Panc1 (cell line): ENCODE measurements at regions of chr12 and their contacts with region 1.

Region 1: DNA sequence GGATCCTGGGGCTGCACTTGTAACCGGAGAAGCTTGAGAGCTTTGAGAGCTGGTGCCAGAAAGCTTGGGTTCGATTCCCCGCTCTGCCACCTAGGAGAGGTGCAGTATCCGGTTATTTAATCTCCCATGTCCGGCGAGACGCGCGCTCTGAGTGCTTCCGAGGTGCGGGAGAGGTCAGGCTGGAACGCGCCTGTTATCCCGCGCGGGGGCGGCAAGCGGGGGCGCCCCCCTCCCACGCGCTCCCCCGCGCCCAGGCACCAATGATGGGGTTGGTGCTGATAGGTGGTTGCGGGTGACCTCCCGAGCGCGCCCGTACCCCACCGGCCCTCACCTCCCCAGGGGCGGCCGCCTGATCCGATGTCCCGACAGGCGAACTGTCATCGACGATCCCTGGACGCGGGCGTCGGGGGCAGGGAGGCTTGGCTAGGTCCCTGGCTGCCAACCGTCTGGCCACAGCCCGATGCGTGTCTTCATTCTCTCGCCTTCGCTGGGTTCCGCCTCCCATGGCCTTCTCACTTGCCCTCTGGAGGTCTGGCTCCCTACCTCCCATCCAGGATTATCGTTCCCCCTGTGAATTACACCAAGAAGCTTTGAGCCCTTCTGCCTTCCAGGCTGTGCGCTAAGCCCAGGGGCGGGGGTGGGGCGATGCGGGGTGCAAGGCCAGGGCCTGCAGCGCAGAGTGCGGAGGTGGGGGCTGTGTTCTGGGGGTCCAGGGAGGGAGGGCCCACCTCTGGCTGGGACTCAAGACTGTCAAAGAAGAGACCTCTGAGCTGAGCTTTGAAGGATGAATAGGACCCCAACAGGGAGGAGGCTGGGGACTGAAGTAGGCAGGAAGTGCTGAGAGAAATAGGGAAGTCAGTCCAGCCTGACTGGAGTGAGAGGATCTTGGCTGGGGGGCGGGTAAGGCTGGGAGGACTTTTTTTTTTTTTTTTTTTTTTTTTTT is 7.6 kb upstream of the RACGAP1 start:
- DNase-seq: no peak
- ATAC-seq: no peak
- H3K4me3 ChIP-seq: no peak overlapping the region
- H3K27ac ChIP-seq: no peak overlapping the region
- H3K4me1 ChIP-seq: no peaks in the 10 kb centered on the region
- H3K27me3 ChIP-seq: no peaks in the 10 kb centered on the region
- CTCF ChIP-seq: no peak

Region 2: DNA sequence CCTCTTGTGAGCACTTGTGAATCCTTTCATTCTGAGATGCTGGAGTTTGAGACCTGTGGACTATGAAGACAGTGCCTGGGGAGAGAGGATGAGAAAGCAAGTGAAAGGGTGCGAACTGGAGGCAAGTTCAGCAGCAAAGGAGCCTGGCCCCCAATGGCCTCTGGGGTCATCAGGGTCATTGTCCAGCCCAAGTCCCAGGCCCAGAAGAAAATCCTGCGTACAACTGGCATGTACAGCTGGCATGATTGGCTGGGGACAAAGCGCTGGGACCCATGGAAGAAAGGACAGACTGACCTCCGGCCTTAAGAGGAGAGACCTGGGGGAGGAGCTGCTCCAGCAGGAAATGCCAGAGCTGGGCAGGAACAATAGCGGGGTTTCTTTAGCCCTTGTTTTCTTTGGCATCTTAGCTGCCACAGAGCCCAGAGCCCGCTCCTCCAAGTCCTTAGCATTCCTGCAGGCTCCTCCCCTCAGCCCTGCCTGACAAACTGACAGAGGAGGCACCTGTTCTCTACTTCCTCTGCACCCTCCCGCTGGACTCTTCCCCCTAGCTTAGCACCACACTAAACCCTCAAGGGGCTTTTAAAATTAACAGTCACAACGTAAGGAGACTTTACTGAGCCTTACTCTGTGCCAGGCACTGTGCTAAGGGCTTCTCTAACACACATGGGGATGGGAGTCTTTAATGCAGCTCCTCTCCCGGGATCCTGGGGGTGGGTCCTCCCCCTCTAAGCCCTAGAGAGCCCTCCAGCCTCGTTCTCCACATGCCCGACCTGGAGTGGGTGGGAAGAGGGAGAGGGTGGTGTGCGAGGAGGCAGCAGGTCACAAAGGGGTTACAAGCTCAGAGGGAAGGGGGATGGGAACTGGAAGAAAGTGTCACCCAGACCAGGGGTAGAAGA is 73.1 kb before region 1 on chr12:
- CTCF ChIA-PET with region 1: no interaction called
- POLR2A ChIA-PET with region 1: no interaction called
- in situ Hi-C with region 1: no loop called
- intact Hi-C with region 1: no loop called
- DNase-seq: no peak
- ATAC-seq: peak; percentile 81
- H3K4me3 ChIP-seq: no peak overlapping the region
- H3K27ac ChIP-seq: peak overlapping the region; percentile 80
- H3K4me1 ChIP-seq: peaks cover 33% of the 10 kb centered on the region
- H3K27me3 ChIP-seq: no peaks in the 10 kb centered on the region
- CTCF ChIP-seq: no peak

Region 3: DNA sequence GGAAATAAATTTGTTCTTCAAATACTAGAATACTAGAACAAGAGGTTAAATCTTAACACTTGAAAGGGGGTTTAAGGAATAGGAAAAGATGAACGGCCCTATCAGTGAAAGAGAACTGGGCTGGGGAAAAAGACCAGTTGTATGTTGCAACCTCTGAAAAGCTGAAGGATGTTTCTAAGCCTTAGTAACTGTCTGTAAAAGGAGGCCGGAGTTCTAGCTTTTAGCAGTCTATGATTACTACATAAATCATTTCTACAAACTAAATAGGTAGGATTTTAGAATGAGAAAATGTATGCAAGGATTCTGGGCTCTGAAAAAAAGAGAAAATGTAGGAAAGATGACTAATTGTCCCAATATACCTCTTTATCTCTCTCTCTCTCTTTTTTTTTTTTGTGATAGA is 129.3 kb after region 1 on chr12:
- CTCF ChIA-PET with region 1: no interaction called
- POLR2A ChIA-PET with region 1: interaction called, 11 read pairs
- in situ Hi-C with region 1: no loop called
- intact Hi-C with region 1: no loop called
- DNase-seq: no peak
- ATAC-seq: no peak
- H3K4me3 ChIP-seq: no peak overlapping the region
- H3K27ac ChIP-seq: no peak overlapping the region
- H3K4me1 ChIP-seq: peaks cover 8% of the 10 kb centered on the region
- H3K27me3 ChIP-seq: no peaks in the 10 kb centered on the region
- CTCF ChIP-seq: no peak